Psoas muscle (tissue), 8 donors: ENCODE measurements at regions of chr3 and their contacts with region 1.

Region 1: GRCh38 chr3:150035301-150035779 is 64.6 kb upstream of the PFN2 start:
- DNase-seq: peak in 1 of 2 donors; percentile 63
- ATAC-seq: peak; percentile 74 to 85 (median 78)
- H3K4me3 ChIP-seq: peak overlapping the region; percentile 23
- H3K27ac ChIP-seq: peak overlapping the region; percentile 87
- H3K4me1 ChIP-seq: peaks cover 14% of the 10 kb centered on the region
- H3K27me3 ChIP-seq: no peaks in the 10 kb centered on the region
- CTCF ChIP-seq: no peak

Region 2: DNA sequence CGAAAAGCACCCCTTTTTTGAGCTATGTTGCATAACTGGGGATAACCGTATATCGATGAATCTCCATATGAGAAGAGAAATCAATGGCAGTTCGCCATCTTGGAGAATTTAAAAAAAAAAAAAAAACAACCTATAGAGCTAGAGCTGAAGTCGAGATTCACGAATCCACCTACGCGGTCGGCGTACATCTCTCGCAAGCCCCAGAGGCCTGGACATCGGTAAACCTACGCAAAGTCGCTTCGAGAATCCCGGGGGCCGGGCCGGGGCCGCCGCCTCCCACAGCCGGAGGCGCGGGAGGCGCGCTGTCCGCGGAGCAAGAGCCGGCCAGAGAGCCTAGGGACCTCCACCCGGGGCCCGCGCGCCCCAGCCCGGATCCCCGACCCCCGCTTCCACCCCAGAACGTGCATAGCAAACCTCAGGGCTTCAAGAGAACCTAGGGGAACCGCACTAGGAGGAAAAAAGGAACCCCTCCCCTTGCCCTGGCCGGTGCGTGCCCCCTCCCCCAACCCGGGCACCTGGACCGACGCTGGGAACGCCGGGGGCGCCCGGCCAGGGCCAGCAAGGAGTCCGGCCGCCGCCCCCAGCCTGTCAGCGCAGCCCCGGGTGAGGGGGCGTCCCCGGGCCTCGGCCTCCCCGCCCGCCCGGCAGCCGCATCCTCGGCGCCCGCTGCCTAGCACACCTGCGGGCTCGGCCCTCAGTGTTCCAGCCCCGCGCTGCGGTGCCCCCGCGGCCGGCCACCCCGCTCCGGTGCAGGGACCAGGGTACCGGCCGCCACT is 65.2 kb before region 1 on chr3:
- intact Hi-C with region 1: loop called (anchors 1 to 5 kb)
- DNase-seq: peak; percentile 80 to 91
- ATAC-seq: peak; percentile 55 to 65 (median 59)
- H3K4me3 ChIP-seq: peak overlapping the region; percentile 90
- H3K27ac ChIP-seq: peak overlapping the region; percentile 97
- H3K4me1 ChIP-seq: peaks cover 17% of the 10 kb centered on the region
- H3K27me3 ChIP-seq: no peaks in the 10 kb centered on the region
- CTCF ChIP-seq: no peak

Region 3: DNA sequence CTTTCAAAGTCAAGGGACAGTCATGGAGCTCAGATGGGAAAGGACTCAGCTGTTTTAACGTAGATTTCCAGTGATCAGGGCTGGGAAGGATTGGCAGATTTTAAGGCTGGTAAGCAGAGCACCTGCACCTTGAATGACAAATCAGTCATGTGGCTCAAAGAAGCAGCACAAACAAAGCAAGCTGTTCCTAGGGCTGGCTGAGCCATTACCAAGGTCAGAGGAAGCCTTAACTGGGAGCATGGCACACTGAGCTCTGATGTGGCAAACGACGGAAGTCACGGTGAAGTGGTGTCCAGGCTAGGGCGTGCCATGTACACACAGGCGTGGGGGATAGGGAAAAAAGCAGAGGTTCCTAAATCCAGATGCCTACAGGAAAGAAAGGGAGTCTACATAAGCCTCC is 20.0 kb after region 1 on chr3:
- intact Hi-C with region 1: loop called (anchors 2 kb)
- DNase-seq: no peak
- ATAC-seq: peak; percentile 17 to 71 (median 50)
- H3K4me3 ChIP-seq: no peak overlapping the region
- H3K27ac ChIP-seq: peak overlapping the region; percentile 26
- H3K4me1 ChIP-seq: peaks cover 14% of the 10 kb centered on the region
- H3K27me3 ChIP-seq: no peaks in the 10 kb centered on the region
- CTCF ChIP-seq: no peak

Region 4: GRCh38 chr3:150094150-150094925 is 59.0 kb after region 1 on chr3:
- intact Hi-C with region 1: loop called in 1 of 2 experiments (anchors 1 kb)
- DNase-seq: peak; percentile 67 to 91
- ATAC-seq: peak; percentile 93 to 95 (median 94)
- H3K4me3 ChIP-seq: no peak overlapping the region
- H3K27ac ChIP-seq: peak overlapping the region; percentile 90
- H3K4me1 ChIP-seq: peaks cover 55% of the 10 kb centered on the region
- H3K27me3 ChIP-seq: no peaks in the 10 kb centered on the region
- CTCF ChIP-seq: no peak

Region 5: DNA sequence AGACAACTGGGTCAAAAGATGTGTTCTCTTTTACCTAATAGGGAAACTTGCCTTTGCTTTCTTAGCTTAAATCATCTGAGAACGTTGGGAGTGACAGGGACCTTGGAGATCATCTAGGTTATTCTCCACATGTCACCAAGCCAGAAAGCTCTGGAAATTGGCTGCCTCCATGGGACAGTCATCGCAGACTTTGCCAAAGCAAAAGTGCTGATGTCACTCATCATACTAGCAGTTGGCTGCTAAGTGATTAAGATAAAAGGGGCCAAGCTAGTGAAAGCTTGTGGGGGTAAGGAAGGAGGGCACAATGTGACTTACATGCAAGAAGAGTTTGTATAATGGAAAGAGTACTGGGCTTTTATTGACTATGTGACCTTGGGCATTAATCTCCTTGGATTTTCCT is 133.4 kb after region 1 on chr3:
- intact Hi-C with region 1: loop called in 1 of 2 experiments (anchors 5 kb)
- DNase-seq: peak; percentile 56 to 67
- ATAC-seq: peak; percentile 94 to 97 (median 96)
- H3K4me3 ChIP-seq: no peak overlapping the region
- H3K27ac ChIP-seq: peak overlapping the region; percentile 76
- H3K4me1 ChIP-seq: peaks cover 27% of the 10 kb centered on the region
- H3K27me3 ChIP-seq: no peaks in the 10 kb centered on the region
- CTCF ChIP-seq: no peak

Region 6: GRCh38 chr3:150227839-150228238 is 192.5 kb after region 1 on chr3:
- intact Hi-C with region 1: no loop called
- DNase-seq: no peak
- ATAC-seq: peak; percentile 60 to 78 (median 71)
- H3K4me3 ChIP-seq: no peak overlapping the region
- H3K27ac ChIP-seq: no peak overlapping the region
- H3K4me1 ChIP-seq: no peaks in the 10 kb centered on the region
- H3K27me3 ChIP-seq: no peaks in the 10 kb centered on the region
- CTCF ChIP-seq: peak; percentile 64